ENCODE measurements at regions of chr4 and their contacts with region 1.

Region 1: GRCh38 chr4:109998867-109999584 is 86.3 kb downstream of the EGF start:
- DNase-seq: peak in 13 of 35 experiments; percentile 0 to 84 (median 15)
- ATAC-seq: peak; percentile 59 to 80 (median 68)
- H3K4me3 ChIP-seq: no peak overlapping the region
- H3K4me3 Mint-ChIP-seq: no peak overlapping the region
- H3K27ac ChIP-seq: no peak overlapping the region
- H3K27ac Mint-ChIP-seq: no peak overlapping the region
- H3K4me1 ChIP-seq: no peaks in the 10 kb centered on the region
- H3K4me1 Mint-ChIP-seq: peaks cover 0 to 9% (median 0%) of the 10 kb centered on the region in 3 donors
- H3K27me3 ChIP-seq: peaks cover 0 to 3% of the 10 kb centered on the region in 2 experiments
- H3K27me3 Mint-ChIP-seq: peaks cover 3 to 9% of the 10 kb centered on the region in 2 donors

Region 2: DNA sequence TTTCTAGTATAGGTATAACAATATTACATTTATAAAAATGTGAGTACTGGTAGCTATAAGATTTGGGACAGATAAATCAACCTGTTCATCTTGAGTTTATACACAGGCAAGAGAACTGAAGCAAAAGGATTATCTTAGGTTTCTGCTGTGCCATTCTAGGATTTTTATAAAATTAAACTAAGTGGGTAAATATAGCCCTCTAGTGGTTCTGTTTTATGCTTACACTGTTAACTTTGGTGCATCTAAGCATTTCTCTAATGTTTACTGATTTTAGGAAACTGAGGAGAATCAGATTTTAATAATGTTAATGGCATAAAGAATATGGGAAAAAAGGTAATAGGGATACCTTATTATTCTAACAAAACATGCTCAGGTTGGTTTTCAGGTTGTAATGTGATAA is 172.3 kb before region 1 on chr4:
- CTCF ChIA-PET with region 1: no interaction called
- POLR2A ChIA-PET with region 1: no interaction called
- DNase-seq: peak in 1 of 35 experiments; percentile 46
- ATAC-seq: peak in 2 of 4 experiments; percentile 52 to 64
- H3K4me3 ChIP-seq: no peak overlapping the region
- H3K4me3 Mint-ChIP-seq: no peak overlapping the region
- H3K27ac ChIP-seq: no peak overlapping the region
- H3K27ac Mint-ChIP-seq: no peak overlapping the region
- H3K4me1 ChIP-seq: no peaks in the 10 kb centered on the region
- H3K4me1 Mint-ChIP-seq: peaks cover 0 to 2% (median 0%) of the 10 kb centered on the region in 3 donors
- H3K27me3 ChIP-seq: no peaks in the 10 kb centered on the region
- H3K27me3 Mint-ChIP-seq: no peaks in the 10 kb centered on the region

Region 3: GRCh38 chr4:110163327-110164069 is 164.5 kb after region 1 on chr4:
- CTCF ChIA-PET with region 1: interaction called in 1 of 2 experiments, 14 read pairs
- POLR2A ChIA-PET with region 1: no interaction called
- DNase-seq: no peak
- ATAC-seq: no peak
- H3K4me3 ChIP-seq: no peak overlapping the region
- H3K4me3 Mint-ChIP-seq: no peak overlapping the region
- H3K27ac ChIP-seq: no peak overlapping the region
- H3K27ac Mint-ChIP-seq: peak overlapping the region; percentile 82 to 96
- H3K4me1 ChIP-seq: peaks cover 21 to 24% of the 10 kb centered on the region in 2 experiments
- H3K4me1 Mint-ChIP-seq: peaks cover 37 to 39% (median 38%) of the 10 kb centered on the region in 3 donors
- H3K27me3 ChIP-seq: no peaks in the 10 kb centered on the region
- H3K27me3 Mint-ChIP-seq: no peaks in the 10 kb centered on the region